Heart right ventricle (tissue), 16 donors: ENCODE measurements at regions of chr5 and their contacts with region 1.

Region 1: GRCh38 chr5:78467752-78468357 is 107.4 kb downstream of the SCAMP1 start:
- DNase-seq: no peak
- ATAC-seq: peak in 6 of 8 donors; percentile 53 to 82 (median 64)
- H3K4me3 ChIP-seq: no peak overlapping the region
- H3K27ac ChIP-seq: no peak overlapping the region
- H3K4me1 ChIP-seq: peaks cover 0 to 4% (median 0%) of the 10 kb centered on the region in 9 donors
- H3K27me3 ChIP-seq: no peaks in the 10 kb centered on the region
- CTCF ChIP-seq: peak; percentile 63 to 88 (median 79)

Region 2: DNA sequence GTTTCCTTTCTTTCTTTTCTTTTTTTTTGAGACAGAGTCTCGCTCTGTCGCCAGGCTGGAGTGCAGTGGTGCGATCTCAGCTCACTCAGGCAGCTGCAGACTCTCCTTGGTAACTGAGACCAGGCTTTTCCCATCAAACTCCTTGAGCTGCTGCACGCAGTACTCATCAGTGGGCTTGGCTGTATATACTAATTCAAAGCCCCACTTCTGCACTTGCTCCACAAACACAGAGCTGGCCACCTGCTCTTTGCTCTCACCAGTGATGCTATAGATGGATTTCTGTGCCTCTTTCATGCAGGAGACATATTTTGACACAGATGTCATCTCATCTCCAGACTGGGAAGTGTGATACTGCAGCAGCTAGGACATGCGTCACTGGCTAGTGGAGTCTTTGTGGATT is 426.1 kb before region 1 on chr5:
- intact Hi-C with region 1: no loop called
- DNase-seq: no peak
- ATAC-seq: no peak
- H3K4me3 ChIP-seq: no peak overlapping the region
- H3K27ac ChIP-seq: no peak overlapping the region
- H3K4me1 ChIP-seq: no peaks in the 10 kb centered on the region
- H3K27me3 ChIP-seq: no peaks in the 10 kb centered on the region
- CTCF ChIP-seq: no peak

Region 3: GRCh38 chr5:78320401-78320800 is 147.5 kb before region 1 on chr5:
- intact Hi-C with region 1: loop called in 1 of 10 experiments (anchors 2 kb)
- DNase-seq: no peak
- ATAC-seq: no peak
- H3K4me3 ChIP-seq: no peak overlapping the region
- H3K27ac ChIP-seq: no peak overlapping the region
- H3K4me1 ChIP-seq: no peaks in the 10 kb centered on the region
- H3K27me3 ChIP-seq: no peaks in the 10 kb centered on the region
- CTCF ChIP-seq: peak in 8 of 9 donors; percentile 15 to 72 (median 64)

Region 4: DNA sequence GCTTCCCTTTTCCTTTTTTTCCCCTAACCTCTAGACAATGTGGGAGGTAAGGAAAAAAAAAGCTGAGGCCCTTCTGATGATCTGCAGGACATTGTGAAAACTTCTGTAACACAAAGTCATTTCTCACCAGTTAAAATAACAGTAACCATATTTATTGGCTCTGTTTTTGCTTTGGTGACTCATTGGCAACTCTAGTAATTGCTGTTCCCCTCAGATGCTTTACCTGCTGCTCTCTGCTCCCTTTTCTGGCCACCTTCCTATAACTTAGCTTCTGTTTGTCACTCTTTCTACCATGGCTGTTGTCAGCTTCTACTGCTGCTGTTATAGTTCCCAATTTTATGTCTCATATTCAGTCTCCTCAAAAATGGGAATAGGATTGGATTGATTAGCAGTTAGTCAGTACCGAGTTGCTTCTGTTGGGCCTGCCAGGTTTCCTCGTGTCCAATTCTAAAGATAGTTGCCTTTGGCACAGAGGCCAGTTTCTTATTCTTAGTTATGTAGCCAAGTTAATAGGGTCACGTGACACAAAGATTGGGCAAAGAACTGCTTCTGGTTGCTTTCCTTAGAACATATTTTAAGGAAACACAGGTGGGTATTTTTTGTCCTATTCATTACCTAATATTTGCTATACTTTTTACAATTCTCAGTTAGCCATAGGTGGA is 90.7 kb before region 1 on chr5:
- intact Hi-C with region 1: no loop called
- DNase-seq: peak; percentile 11 to 16
- ATAC-seq: peak in 6 of 8 donors; percentile 28 to 86 (median 68)
- H3K4me3 ChIP-seq: no peak overlapping the region
- H3K27ac ChIP-seq: peak overlapping the region in 5 of 10 donors; percentile 3 to 45 (median 21)
- H3K4me1 ChIP-seq: peaks cover 0 to 30% (median 19%) of the 10 kb centered on the region in 9 donors
- H3K27me3 ChIP-seq: no peaks in the 10 kb centered on the region
- CTCF ChIP-seq: no peak

Region 5: DNA sequence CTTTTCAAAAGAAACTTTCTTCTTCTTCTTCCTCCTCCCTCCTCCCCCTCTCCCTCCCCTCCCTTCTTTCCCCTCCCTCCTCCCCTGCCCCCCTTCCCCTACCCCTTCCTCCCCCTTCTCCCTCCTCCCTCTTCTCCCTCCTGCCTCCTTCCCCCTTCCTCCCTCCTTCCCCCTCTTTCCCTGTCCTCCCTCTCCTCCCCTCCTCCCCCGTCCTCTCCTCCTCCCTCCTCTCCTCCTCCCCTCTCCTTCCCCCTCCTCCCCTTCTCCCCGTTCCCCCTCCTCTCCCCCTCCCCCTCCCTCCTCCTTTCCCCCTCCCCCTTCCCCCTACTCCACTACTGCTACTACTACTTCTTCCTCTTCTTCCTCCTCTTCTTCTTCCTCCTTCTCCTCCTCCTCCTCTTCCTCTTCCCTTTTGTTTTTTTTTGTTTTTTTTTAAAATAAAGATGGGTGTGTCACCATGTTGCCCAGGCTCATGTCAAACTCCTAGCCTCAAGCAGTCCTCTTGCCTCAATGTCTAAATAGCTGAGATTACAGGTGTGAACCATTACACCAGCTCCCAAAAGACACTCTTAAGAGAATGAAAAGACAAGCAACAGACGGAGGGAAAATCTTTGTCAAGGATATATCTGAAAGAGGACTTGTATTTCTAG is 20.0 kb before region 1 on chr5:
- intact Hi-C with region 1: no loop called
- DNase-seq: no peak
- ATAC-seq: no peak
- H3K4me3 ChIP-seq: no peak overlapping the region
- H3K27ac ChIP-seq: no peak overlapping the region
- H3K4me1 ChIP-seq: no peaks in the 10 kb centered on the region
- H3K27me3 ChIP-seq: no peaks in the 10 kb centered on the region
- CTCF ChIP-seq: no peak

Region 6: GRCh38 chr5:78504704-78505677 is 37.1 kb after region 1 on chr5:
- intact Hi-C with region 1: loop called in 1 of 10 experiments (anchors 2 kb)
- DNase-seq: peak; percentile 80 to 95
- ATAC-seq: peak; percentile 92 to 98 (median 96)
- H3K4me3 ChIP-seq: no peak overlapping the region
- H3K27ac ChIP-seq: peak overlapping the region in 8 of 10 donors; percentile 3 to 76 (median 64)
- H3K4me1 ChIP-seq: peaks cover 19 to 97% (median 51%) of the 10 kb centered on the region in 9 donors
- H3K27me3 ChIP-seq: no peaks in the 10 kb centered on the region
- CTCF ChIP-seq: no peak

Region 7: DNA sequence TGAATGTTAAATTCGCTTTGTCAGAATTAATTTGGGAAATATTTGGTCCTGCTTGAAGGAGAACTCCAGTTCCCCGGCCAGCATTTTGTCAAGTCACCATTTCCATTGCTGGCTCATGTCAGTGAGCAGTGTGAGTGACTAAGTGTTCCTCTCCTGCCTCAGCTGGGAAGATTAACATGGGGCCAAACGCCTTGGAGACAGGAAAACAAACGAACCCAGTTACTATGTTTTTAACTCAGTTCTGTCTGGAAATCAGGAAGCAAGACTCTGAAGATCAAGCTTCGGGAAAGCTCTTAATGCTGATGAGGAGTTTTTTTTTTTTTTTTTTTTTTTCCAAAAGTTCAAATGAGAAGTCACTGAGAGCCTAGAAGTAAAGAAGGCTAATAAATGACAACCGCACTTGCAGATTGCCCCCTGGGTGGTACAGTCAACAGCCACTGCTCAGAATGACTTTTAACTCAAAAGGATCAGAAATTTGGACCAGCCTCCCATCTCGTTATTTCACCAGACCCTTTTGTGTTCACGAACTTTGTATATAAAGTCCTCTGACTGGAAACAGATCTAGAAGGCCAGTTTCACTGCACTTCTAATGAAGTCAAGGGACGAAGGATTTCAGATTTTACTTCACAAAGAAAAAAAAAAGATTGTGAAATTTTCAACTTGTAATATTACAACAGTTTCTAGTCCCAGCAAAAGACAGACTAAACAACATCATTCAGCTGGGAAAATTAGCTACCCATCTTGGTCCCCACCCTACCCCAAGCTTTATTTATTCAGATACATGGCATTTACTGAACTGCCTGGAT is 59.4 kb after region 1 on chr5:
- intact Hi-C with region 1: loop called in 6 of 10 experiments (anchors 5 to 10 kb)
- DNase-seq: peak in 1 of 2 donors; percentile 87
- ATAC-seq: peak; percentile 85 to 93 (median 92)
- H3K4me3 ChIP-seq: no peak overlapping the region
- H3K27ac ChIP-seq: peak overlapping the region in 8 of 10 donors; percentile 38 to 85 (median 59)
- H3K4me1 ChIP-seq: peaks cover 0 to 83% (median 37%) of the 10 kb centered on the region in 9 donors
- H3K27me3 ChIP-seq: no peaks in the 10 kb centered on the region
- CTCF ChIP-seq: no peak

Region 8: DNA sequence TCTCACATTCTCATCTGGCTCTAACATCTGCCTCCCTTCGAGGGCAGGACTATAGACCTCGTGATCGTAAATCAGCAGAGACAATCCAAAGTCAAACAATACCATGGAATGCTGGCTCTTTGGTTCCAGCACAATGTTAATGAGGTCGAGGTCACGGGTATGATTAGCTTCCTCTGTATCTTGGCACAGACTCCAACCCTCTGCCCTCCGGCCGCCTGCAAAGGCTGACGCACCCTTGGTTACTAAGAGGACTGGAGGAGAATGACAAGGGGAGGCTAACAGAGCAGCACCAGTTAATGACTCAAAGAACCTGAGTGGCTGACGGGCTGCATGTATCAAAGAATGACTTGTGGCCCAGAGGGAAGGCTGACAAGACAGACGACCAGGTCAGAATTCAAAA is 170.6 kb after region 1 on chr5:
- intact Hi-C with region 1: loop called in 5 of 10 experiments (anchors 10 kb)
- DNase-seq: peak; percentile 53 to 76
- ATAC-seq: peak; percentile 88 to 97 (median 94)
- H3K4me3 ChIP-seq: peak overlapping the region in 1 of 10 donors; percentile 1
- H3K27ac ChIP-seq: peak overlapping the region in 8 of 10 donors; percentile 17 to 67 (median 52)
- H3K4me1 ChIP-seq: peaks cover 11 to 70% (median 52%) of the 10 kb centered on the region in 9 donors
- H3K27me3 ChIP-seq: no peaks in the 10 kb centered on the region
- CTCF ChIP-seq: no peak

Region 9: GRCh38 chr5:78648359-78649210 is 180.7 kb after region 1 on chr5 and contains the start of gene LHFPL2:
- intact Hi-C with region 1: loop called in 4 of 10 experiments (anchors 10 kb)
- DNase-seq: peak; percentile 72 to 82
- ATAC-seq: peak; percentile 74 to 92 (median 84)
- H3K4me3 ChIP-seq: peak within 1 kb of the TSS; percentile 70 to 89 (median 80)
- H3K27ac ChIP-seq: peak within 1 kb of the TSS; percentile 76 to 96 (median 94)
- H3K4me1 ChIP-seq: peaks cover 0 to 41% (median 20%) of the 10 kb centered on the region in 9 donors
- H3K27me3 ChIP-seq: peaks cover 0 to 28% (median 0%) of the 10 kb centered on the region in 7 donors
- CTCF ChIP-seq: no peak
- total RNA-seq, gene LHFPL2: 3.8 to 14.9 (median 5.1) TPM

Region 10: GRCh38 chr5:78747705-78748359 is 280.0 kb after region 1 on chr5:
- intact Hi-C with region 1: no loop called
- DNase-seq: no peak
- ATAC-seq: peak in 6 of 8 donors; percentile 11 to 75 (median 62)
- H3K4me3 ChIP-seq: no peak overlapping the region
- H3K27ac ChIP-seq: peak overlapping the region in 2 of 10 donors; percentile 15 to 40
- H3K4me1 ChIP-seq: peaks cover 0 to 3% (median 0%) of the 10 kb centered on the region in 9 donors
- H3K27me3 ChIP-seq: peaks cover 0 to 9% (median 0%) of the 10 kb centered on the region in 7 donors
- CTCF ChIP-seq: no peak

Region 11: GRCh38 chr5:78964887-78965286 is 497.0 kb after region 1 on chr5:
- intact Hi-C with region 1: loop called in 8 of 10 experiments (anchors 5 to 10 kb)
- DNase-seq: peak in 1 of 2 donors; percentile 41
- ATAC-seq: peak; percentile 69 to 90 (median 81)
- H3K4me3 ChIP-seq: no peak overlapping the region
- H3K27ac ChIP-seq: no peak overlapping the region
- H3K4me1 ChIP-seq: no peaks in the 10 kb centered on the region
- H3K27me3 ChIP-seq: no peaks in the 10 kb centered on the region
- CTCF ChIP-seq: peak; percentile 8 to 76 (median 55)